ENCODE measurements at regions of chr12 and their contacts with region 1.

Region 1: GRCh38 chr12:57462251-57462911 is 2.8 kb downstream of the GLI1 start:
- DNase-seq: no peak
- H3K4me3 ChIP-seq: peak overlapping the region; percentile 88
- H3K27ac ChIP-seq: peak overlapping the region; percentile 85
- H3K27me3 ChIP-seq: no peaks in the 10 kb centered on the region
- CTCF ChIP-seq: peak; percentile 98

Region 2: DNA sequence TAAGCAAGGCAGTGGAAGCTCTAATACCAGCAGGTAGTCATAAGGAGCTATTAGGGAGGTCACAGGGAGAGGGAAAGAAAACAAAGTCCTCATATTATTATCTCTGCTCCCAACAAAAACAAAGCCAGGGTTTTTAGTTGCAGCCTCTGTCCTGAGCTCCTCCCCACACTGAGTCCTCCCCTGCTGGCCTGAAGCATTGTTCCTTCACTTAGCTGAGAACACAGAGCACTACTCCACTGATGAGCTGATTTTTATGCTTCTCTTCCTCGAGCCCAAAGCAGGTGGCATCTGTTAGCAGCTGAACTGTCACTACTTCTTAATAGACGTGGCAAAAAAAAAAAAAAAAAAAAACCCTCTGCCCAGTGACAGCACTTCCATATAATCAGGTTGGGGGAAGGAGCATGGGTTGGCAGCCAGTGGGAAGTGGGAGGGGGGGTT is 200.9 kb before region 1 on chr12:
- CTCF ChIA-PET with region 1: interaction called, 17 read pairs
- POLR2A ChIA-PET with region 1: no interaction called
- DNase-seq: no peak
- H3K4me3 ChIP-seq: no peak overlapping the region
- H3K27ac ChIP-seq: no peak overlapping the region
- H3K27me3 ChIP-seq: no peaks in the 10 kb centered on the region
- CTCF ChIP-seq: no peak

Region 3: GRCh38 chr12:57280211-57281062 is 181.9 kb before region 1 on chr12:
- CTCF ChIA-PET with region 1: interaction called, 15 read pairs
- POLR2A ChIA-PET with region 1: no interaction called
- DNase-seq: peak; percentile 91
- H3K4me3 ChIP-seq: peak overlapping the region; percentile 38
- H3K27ac ChIP-seq: peak overlapping the region; percentile 74
- H3K27me3 ChIP-seq: no peaks in the 10 kb centered on the region
- CTCF ChIP-seq: no peak

Region 4: DNA sequence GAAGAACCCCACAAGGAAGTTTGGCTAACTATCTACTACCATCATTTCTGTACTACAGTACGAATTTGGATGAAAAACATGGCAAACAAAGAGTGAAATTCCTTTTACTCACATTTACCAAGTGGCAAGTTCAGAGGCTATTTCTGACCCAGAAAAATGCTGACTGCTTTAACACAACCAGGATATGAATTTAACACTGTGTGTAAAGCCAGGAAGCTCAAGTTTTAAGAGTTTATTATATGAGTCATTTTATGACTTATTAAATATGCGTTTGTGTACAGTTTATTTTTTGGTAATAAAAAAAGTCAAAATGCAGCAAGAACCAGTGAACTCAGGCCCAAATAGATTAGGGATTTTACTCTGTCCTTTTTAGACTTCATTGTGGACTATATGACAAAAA is 153.0 kb before region 1 on chr12:
- CTCF ChIA-PET with region 1: interaction called, 37 read pairs
- POLR2A ChIA-PET with region 1: no interaction called
- DNase-seq: no peak
- H3K4me3 ChIP-seq: no peak overlapping the region
- H3K27ac ChIP-seq: no peak overlapping the region
- H3K27me3 ChIP-seq: no peaks in the 10 kb centered on the region
- CTCF ChIP-seq: no peak

Region 5: DNA sequence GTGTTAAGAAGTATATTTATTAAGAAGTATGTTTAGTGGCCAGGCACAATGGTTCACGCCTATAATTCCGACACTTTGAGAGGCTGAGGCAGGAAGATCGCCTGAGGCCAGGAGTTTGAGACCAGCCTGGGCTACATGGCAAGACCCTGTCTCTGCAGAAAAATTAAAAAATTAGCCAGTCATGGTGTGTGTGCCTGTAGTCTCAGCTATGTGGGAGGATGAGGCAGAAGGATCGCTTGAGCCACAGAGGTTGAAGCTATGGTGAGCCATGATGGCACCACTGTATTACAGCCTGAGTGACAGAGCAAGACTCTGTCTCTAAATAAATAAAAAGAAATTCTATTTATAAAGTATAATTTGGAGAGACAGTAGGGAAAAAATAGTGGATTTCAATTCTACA is 51.8 kb before region 1 on chr12:
- CTCF ChIA-PET with region 1: interaction called, 14 read pairs
- POLR2A ChIA-PET with region 1: no interaction called
- DNase-seq: no peak
- H3K4me3 ChIP-seq: no peak overlapping the region
- H3K27ac ChIP-seq: no peak overlapping the region
- H3K27me3 ChIP-seq: no peaks in the 10 kb centered on the region
- CTCF ChIP-seq: no peak

Region 6: GRCh38 chr12:57446292-57446960 is 16.0 kb before region 1 on chr12:
- CTCF ChIA-PET with region 1: interaction called, 14 read pairs
- POLR2A ChIA-PET with region 1: no interaction called
- DNase-seq: no peak
- H3K4me3 ChIP-seq: no peak overlapping the region
- H3K27ac ChIP-seq: no peak overlapping the region
- H3K27me3 ChIP-seq: no peaks in the 10 kb centered on the region
- CTCF ChIP-seq: no peak

Region 7: GRCh38 chr12:57483481-57483880 is 21.1 kb after region 1 on chr12:
- CTCF ChIA-PET with region 1: interaction called, 13 read pairs
- POLR2A ChIA-PET with region 1: no interaction called
- DNase-seq: no peak
- H3K4me3 ChIP-seq: no peak overlapping the region
- H3K27ac ChIP-seq: peak overlapping the region; percentile 40
- H3K27me3 ChIP-seq: peaks cover 4% of the 10 kb centered on the region
- CTCF ChIP-seq: no peak

Measured in AG04450 (cell line).